ENCODE measurements at regions of chr2 and their contacts with region 1.

Region 1: GRCh38 chr2:241702132-241703031 is 543 bp downstream of the ING5 start:
- DNase-seq: no peak
- H3K4me3 ChIP-seq: peak overlapping the region; percentile 83
- CTCF ChIP-seq: peak; percentile 53

Region 2: GRCh38 chr2:241686649-241687425 is 15.5 kb before region 1 on chr2 and contains the start of gene DTYMK:
- CTCF ChIA-PET with region 1: interaction called, 7 read pairs
- POLR2A ChIA-PET with region 1: interaction called, 11 read pairs
- DNase-seq: peak; percentile 44
- H3K4me3 ChIP-seq: peak within 1 kb of the TSS; percentile 96
- CTCF ChIP-seq: no peak

Measured in AG04449 (cell line).